ENCODE measurements at regions of chr2 and their contacts with region 1.

Region 1: DNA sequence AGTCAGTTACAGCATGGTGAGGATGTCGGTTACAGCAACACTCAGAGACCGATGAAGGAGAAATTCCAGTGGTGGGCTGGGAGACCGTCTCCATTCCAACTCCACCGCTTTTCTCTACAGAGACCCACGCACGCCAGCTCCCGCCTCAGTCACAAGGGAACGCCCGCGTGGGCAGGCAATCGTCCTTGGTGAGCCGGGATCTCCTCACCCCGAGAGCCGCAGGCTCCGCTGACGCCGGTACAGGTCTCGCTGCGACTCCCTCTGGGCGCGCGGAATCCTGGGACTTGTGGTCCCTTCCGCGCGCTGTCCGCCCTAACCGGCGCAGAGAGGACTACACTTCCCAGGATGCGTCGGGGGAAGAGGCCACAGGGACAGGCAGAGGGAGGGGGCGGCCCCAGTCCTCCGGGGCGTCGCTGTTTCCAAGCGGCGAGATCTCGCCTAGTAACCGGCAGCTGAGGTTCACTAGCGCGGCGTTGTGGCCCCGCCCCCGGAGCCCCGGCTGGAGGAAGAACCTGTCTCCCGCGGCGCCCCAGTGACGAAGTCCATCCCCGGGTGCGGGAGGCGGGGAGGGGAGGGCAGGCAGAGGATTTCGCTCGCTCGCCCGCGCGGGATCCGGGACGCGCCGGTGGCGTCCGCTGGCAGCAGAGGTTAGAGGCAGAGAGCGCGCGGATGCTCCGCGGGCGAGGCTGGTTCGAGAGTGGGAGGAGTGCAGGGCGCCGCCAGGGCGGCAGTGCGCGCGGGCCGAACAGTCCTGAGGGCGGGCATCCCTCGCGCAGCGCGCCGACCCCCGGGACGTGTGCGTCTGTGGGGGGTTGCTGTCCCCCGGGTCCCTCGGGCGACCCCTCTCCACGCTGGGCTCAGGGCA is at the start of gene EML6:
- DNase-seq: peak; percentile 94 to 99 (median 98)
- ATAC-seq: peak; percentile 98
- H3K4me3 ChIP-seq: peak within 1 kb of the TSS; percentile 77
- H3K4me3 Mint-ChIP-seq: peak within 1 kb of the TSS; percentile 87 to 97 (median 92)
- H3K27ac ChIP-seq: peak within 1 kb of the TSS; percentile 70
- H3K27ac Mint-ChIP-seq: peak within 1 kb of the TSS; percentile 50 to 90 (median 71)
- H3K4me1 ChIP-seq: peaks cover 0 to 6% of the 10 kb centered on the region in 2 donors
- H3K4me1 Mint-ChIP-seq: peaks cover 10 to 20% (median 12%) of the 10 kb centered on the region in 7 donors
- H3K27me3 ChIP-seq: peaks cover 0 to 5% of the 10 kb centered on the region in 2 donors
- H3K27me3 Mint-ChIP-seq: peaks cover 34 to 79% (median 51%) of the 10 kb centered on the region in 5 donors
- total RNA-seq, gene EML6: 0.32 to 2.5 (median 1.5) TPM

Region 2: GRCh38 chr2:54115284-54116137 is 607.9 kb before region 1 on chr2 and contains the start of gene ACYP2:
- CTCF ChIA-PET with region 1: no interaction called
- POLR2A ChIA-PET with region 1: no interaction called
- intact Hi-C with region 1: loop called (anchors 1 kb)
- DNase-seq: peak; percentile 76 to 93 (median 89)
- ATAC-seq: peak; percentile 88
- H3K4me3 ChIP-seq: peak within 1 kb of the TSS; percentile 89
- H3K4me3 Mint-ChIP-seq: peak within 1 kb of the TSS; percentile 92 to 98 (median 97)
- H3K27ac ChIP-seq: peak within 1 kb of the TSS; percentile 93
- H3K27ac Mint-ChIP-seq: peak within 1 kb of the TSS; percentile 98 to 100 (median 99)
- H3K4me1 ChIP-seq: peaks cover 0 to 6% of the 10 kb centered on the region in 2 donors
- H3K4me1 Mint-ChIP-seq: peaks cover 10 to 31% (median 24%) of the 10 kb centered on the region in 7 donors
- H3K27me3 ChIP-seq: no peaks in the 10 kb centered on the region
- H3K27me3 Mint-ChIP-seq: peaks cover 0 to 5% (median 0%) of the 10 kb centered on the region in 5 donors
- total RNA-seq, gene ACYP2: 12.3 to 19.6 (median 15.6) TPM

Region 3: DNA sequence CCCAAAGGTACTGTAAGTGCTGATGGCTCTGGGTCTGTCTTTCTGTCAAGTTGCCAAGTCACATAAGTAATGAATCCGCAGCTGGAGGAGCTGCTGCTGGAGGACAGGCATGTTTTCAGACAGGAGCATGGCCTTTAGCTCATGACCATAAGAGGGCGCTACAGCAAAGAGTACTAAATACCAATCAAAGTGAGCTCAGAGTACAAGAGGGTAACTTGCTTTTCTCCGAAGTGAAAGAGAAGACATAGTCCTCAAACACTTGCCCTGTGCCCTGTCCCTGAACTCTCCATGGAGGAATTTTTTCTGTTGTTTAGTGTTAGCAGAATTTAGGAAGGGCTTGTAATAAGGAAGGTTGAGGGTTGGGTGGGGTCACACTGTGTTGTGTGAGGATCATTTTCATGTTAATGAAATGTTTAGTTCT is 57.9 kb before region 1 on chr2:
- CTCF ChIA-PET with region 1: no interaction called
- POLR2A ChIA-PET with region 1: no interaction called
- intact Hi-C with region 1: loop called in 1 of 2 experiments (anchors 5 kb)
- DNase-seq: peak in 7 of 9 donors; percentile 15 to 61 (median 50)
- ATAC-seq: peak; percentile 82
- H3K4me3 ChIP-seq: no peak overlapping the region
- H3K4me3 Mint-ChIP-seq: no peak overlapping the region
- H3K27ac ChIP-seq: no peak overlapping the region
- H3K27ac Mint-ChIP-seq: peak overlapping the region in 8 of 9 donors; percentile 42 to 96 (median 86)
- H3K4me1 ChIP-seq: no peaks in the 10 kb centered on the region
- H3K4me1 Mint-ChIP-seq: peaks cover 0 to 20% (median 5%) of the 10 kb centered on the region in 7 donors
- H3K27me3 ChIP-seq: no peaks in the 10 kb centered on the region
- H3K27me3 Mint-ChIP-seq: no peaks in the 10 kb centered on the region

Region 4: GRCh38 chr2:55010149-55010591 is 286.8 kb after region 1 on chr2:
- CTCF ChIA-PET with region 1: no interaction called
- POLR2A ChIA-PET with region 1: no interaction called
- intact Hi-C with region 1: loop called (anchors 5 kb)
- DNase-seq: peak; percentile 15 to 71 (median 60)
- ATAC-seq: peak; percentile 94
- H3K4me3 ChIP-seq: peak overlapping the region; percentile 58
- H3K4me3 Mint-ChIP-seq: peak overlapping the region; percentile 88 to 97 (median 92)
- H3K27ac ChIP-seq: peak overlapping the region; percentile 68
- H3K27ac Mint-ChIP-seq: peak overlapping the region; percentile 82 to 96 (median 90)
- H3K4me1 ChIP-seq: peaks cover 27 to 29% of the 10 kb centered on the region in 2 donors
- H3K4me1 Mint-ChIP-seq: peaks cover 44 to 91% (median 79%) of the 10 kb centered on the region in 7 donors
- H3K27me3 ChIP-seq: no peaks in the 10 kb centered on the region
- H3K27me3 Mint-ChIP-seq: no peaks in the 10 kb centered on the region

Region 5: DNA sequence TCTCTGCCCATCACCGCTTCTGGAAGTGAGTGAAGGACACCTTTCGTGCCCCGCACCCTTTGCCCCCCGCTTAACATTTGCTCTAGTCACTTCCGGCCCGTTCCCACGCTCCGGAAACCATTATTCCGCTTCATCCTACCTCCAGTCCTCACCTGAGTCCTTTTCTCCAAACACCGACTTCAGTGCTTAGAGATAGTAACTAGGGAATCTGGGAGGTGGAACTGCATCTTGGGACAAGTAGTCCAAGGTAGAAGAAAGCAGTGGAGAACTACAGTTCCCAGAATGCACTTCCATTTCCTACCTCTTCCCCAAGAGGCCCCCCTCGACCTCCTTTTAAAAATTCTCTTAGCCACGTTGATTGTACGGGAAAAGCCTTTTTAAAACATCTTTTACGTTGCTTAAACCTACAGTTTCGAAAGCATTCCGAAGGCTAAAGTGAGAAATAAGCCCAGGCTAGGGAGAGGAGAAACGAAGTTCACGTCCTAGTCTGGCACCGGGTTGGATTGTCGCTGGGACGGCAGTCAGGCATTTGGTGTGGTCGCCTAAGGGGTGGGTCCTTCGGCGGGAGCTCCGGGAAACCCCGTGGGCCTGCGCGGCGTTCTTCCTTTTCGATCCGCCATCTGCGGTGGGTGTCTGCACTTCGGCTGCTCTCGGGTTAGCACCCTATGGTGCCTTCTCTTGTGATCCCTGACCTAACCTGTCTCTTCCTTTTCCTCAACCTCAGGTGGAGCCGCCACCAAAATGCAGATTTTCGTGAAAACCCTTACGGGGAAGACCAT is 508.9 kb after region 1 on chr2 and contains the starts of genes CLHC1 and RPS27A:
- CTCF ChIA-PET with region 1: no interaction called
- POLR2A ChIA-PET with region 1: no interaction called
- intact Hi-C with region 1: loop called (anchors 1 kb)
- DNase-seq: peak; percentile 90 to 97 (median 93)
- ATAC-seq: peak; percentile 95
- H3K4me3 ChIP-seq: peak within 1 kb of the TSS; percentile 75
- H3K4me3 Mint-ChIP-seq: peak within 1 kb of the TSS; percentile 96 to 100 (median 100)
- H3K27ac ChIP-seq: peak within 1 kb of the TSS; percentile 99
- H3K27ac Mint-ChIP-seq: peak within 1 kb of the TSS; percentile 96 to 99 (median 99)
- H3K4me1 ChIP-seq: peaks cover 26 to 30% of the 10 kb centered on the region in 2 donors
- H3K4me1 Mint-ChIP-seq: peaks cover 41 to 84% (median 63%) of the 10 kb centered on the region in 7 donors
- H3K27me3 ChIP-seq: no peaks in the 10 kb centered on the region
- H3K27me3 Mint-ChIP-seq: no peaks in the 10 kb centered on the region
- total RNA-seq, gene CLHC1: 5.3 to 19.5 (median 15.1) TPM
- total RNA-seq, gene RPS27A: 948 to 2,409 (median 2,155) TPM

Region 6: DNA sequence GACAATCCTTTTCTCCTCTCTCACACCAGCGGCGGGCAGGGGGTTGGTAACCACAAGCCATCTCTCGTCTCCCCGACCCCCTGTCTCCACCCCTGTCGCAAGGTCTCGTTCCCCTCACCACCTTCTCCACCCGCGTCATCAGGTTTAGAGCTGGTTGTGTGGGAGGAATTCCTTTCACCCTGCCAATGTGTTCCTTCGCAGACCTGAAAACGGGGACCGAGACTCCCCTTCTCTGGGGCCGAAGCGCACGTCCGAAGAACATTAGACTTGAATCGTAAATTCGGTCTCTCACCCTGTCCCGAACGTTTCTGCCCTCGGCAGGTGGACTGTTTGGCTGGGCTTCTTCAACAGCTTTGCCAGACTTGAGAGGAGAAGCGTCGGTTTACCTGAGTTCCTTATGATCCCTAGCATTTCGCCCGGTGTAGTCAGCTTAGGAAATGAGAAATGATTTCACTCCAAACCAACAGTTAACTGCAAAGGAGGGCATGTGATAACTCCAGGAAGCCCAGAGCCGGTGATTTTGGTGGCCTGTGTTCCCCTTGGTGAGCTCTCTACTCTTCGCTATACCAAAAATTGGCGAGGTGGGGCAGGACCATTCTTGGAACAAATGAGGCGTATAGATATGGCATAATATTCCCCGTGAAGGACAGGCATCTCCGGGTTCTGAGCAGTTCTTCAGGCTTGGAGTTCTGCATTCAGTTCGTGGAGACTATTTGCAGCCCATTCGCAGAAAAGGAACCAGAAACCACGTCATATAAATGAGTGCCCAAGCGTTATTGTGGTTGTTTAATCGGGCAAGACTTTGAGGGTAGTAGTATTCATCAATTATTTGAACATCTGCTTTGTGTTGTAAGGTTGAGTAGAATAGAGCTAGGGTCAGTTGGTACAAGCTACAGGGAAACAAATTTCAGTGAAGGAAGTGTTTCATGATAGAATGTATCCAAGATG is 796.8 kb after region 1 on chr2:
- CTCF ChIA-PET with region 1: no interaction called
- POLR2A ChIA-PET with region 1: no interaction called
- intact Hi-C with region 1: loop called (anchors 1 kb)
- DNase-seq: peak in 4 of 9 donors; percentile 23 to 58 (median 26)
- ATAC-seq: peak; percentile 31
- H3K4me3 ChIP-seq: peak overlapping the region; percentile 80
- H3K4me3 Mint-ChIP-seq: peak overlapping the region; percentile 89 to 99 (median 98)
- H3K27ac ChIP-seq: peak overlapping the region; percentile 90
- H3K27ac Mint-ChIP-seq: peak overlapping the region; percentile 96 to 100 (median 100)
- H3K4me1 ChIP-seq: peaks cover 0 to 5% of the 10 kb centered on the region in 2 donors
- H3K4me1 Mint-ChIP-seq: peaks cover 5 to 28% (median 16%) of the 10 kb centered on the region in 7 donors
- H3K27me3 ChIP-seq: no peaks in the 10 kb centered on the region
- H3K27me3 Mint-ChIP-seq: no peaks in the 10 kb centered on the region

Measured in naive thymus-derived CD4-positive, alpha-beta T cell (primary cell).